Posterior cingulate gyrus (tissue), 11 donors: ENCODE measurements at regions of chr9 and their contacts with region 1.

Region 1: GRCh38 chr9:96232539-96233241 is 69.3 kb downstream of the HSD17B3 start:
- DNase-seq: peak in 6 of 10 donors; percentile 37 to 93 (median 52)

Region 2: GRCh38 chr9:96317335-96317980 is 84.8 kb after region 1 on chr9:
- intact Hi-C with region 1: loop called (anchors 2 kb)
- DNase-seq: peak in 8 of 10 donors; percentile 36 to 94 (median 60)